K562 (cell line): ENCODE measurements at regions of chr7 and their contacts with region 1.

Region 1: GRCh38 chr7:87231256-87231655 is 11.7 kb upstream of the TMEM243 start:
- DNase-seq: no peak
- ATAC-seq: no peak; the same call in 2 of the 3 replicates
- H3K4me3 ChIP-seq: no peak overlapping the region
- H3K27ac ChIP-seq: no peak overlapping the region
- H3K4me1 ChIP-seq: no peaks in the 10 kb centered on the region
- H3K27me3 ChIP-seq: peaks cover 12 to 17% of the 10 kb centered on the region in 2 experiments; a peak in 4 of 5 replicates
- CTCF ChIP-seq: no peak
- EP300 ChIP-seq: no peak
- POLR2A ChIP-seq: no peak
- RAD21 ChIP-seq: no peak

Region 2: GRCh38 chr7:86823769-86824168 is 407.5 kb before region 1 on chr7:
- CTCF ChIA-PET with region 1: no interaction called
- POLR2A ChIA-PET with region 1: no interaction called
- in situ Hi-C with region 1: no loop called
- intact Hi-C with region 1: loop called (anchors 10 kb)
- DNase-seq: no peak
- ATAC-seq: no peak; the same call in 2 of the 3 replicates
- H3K4me3 ChIP-seq: no peak overlapping the region
- H3K27ac ChIP-seq: no peak overlapping the region
- H3K4me1 ChIP-seq: no peaks in the 10 kb centered on the region
- H3K27me3 ChIP-seq: no peaks in the 10 kb centered on the region
- CTCF ChIP-seq: no peak
- EP300 ChIP-seq: no peak
- POLR2A ChIP-seq: no peak
- RAD21 ChIP-seq: no peak

Region 3: DNA sequence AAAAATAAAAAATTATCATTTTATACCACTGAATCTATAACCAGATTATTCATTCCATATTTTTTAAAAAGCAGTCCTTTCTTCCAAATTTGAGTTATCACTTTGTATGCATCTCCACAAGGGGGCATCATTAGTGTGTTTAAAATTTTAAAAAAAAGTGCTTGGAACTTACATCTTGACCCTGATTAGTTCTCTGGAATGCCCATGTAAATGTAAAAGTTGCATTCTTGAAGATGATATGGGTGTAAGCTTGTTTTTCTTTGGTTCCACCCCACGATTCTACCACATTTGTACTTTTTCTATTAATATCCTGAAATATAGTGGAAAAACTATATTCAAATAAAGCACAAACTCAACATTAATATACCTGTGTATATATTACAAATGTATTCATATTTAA is 316.7 kb before region 1 on chr7:
- CTCF ChIA-PET with region 1: interaction called, 6 read pairs
- POLR2A ChIA-PET with region 1: no interaction called
- in situ Hi-C with region 1: no loop called
- intact Hi-C with region 1: loop called (anchors 2 kb)
- DNase-seq: peak; percentile 34 to 47 (median 36)
- ATAC-seq: peak; percentile 69
- H3K4me3 ChIP-seq: no peak overlapping the region
- H3K27ac ChIP-seq: no peak overlapping the region
- H3K4me1 ChIP-seq: no peaks in the 10 kb centered on the region
- H3K27me3 ChIP-seq: no peaks in the 10 kb centered on the region
- CTCF ChIP-seq: peak; percentile 45 to 69 (median 50); a peak in 4 of 6 replicates
- EP300 ChIP-seq: no peak
- POLR2A ChIP-seq: no peak
- RAD21 ChIP-seq: peak; percentile 59 to 68

Region 4: DNA sequence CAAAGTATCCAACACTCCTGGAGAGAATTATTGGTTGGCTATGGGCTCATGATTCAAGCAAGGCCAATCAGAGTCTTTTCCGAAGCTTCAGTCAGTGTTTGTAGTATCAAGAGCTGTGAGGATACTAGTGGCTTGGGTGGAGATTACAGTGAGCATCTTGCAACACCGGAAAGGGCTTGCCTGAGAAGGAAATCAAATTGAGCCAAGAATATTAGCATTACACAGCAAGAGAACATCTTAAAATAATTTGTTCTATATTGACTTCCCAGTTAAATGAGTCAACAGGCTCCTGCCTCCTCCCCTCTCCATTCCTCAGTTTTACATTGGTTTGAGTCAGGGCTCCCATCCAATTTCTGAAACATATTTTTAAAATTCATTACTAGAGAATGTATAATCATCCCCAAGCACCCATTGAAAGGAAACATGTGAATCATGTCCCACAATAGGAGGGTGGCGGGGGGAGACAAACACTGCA is 299.2 kb before region 1 on chr7:
- CTCF ChIA-PET with region 1: interaction called, 3 read pairs
- POLR2A ChIA-PET with region 1: no interaction called
- in situ Hi-C with region 1: loop called (anchors 5 kb)
- intact Hi-C with region 1: no loop called
- DNase-seq: no peak
- ATAC-seq: peak; percentile 31; the same call in 2 of the 3 replicates
- H3K4me3 ChIP-seq: no peak overlapping the region
- H3K27ac ChIP-seq: no peak overlapping the region; the same call in 2 of the 3 replicates
- H3K4me1 ChIP-seq: peaks cover 4 to 15% of the 10 kb centered on the region in 2 experiments; a peak in 3 of 5 replicates
- H3K27me3 ChIP-seq: no peaks in the 10 kb centered on the region
- CTCF ChIP-seq: no peak
- EP300 ChIP-seq: no peak
- POLR2A ChIP-seq: no peak
- RAD21 ChIP-seq: no peak

Region 5: DNA sequence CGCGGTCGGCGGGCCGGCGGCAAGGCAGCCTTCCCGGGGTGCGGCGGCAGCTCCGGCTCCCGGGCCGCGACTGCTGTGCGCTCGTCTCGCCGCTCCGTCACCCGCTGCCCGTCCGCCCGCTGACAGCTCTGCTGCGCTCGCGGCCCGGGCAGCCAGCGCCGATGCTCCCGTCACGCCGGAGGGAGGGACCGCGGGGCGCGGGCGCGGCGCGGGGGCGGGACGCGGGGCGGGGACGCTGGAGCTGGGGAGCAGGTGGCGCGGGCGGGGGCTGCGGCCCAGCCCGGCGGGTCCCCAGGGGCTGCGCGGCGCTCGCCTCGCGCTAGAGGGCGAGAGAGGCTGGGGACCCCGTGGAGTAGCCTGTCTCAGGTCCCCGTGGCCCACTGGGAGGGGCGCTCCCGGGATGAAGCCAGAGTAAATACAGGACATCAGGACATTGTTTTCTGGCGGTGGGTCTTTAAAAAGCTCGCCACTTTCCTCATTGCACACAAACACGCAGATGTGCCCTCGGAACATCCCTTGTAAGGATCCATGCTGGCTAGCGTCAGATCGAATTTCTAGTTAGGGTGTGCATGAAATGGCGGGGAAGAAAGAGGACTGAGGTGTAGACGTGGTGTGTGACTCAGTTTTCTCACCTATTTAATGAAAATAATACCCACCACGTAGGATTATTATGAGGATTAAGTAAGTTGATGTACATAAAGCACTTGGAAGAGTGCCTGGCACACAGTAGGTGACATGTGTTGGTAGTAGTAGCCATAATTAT is 171.6 kb before region 1 on chr7 and contains the start of gene ELAPOR2:
- CTCF ChIA-PET with region 1: no interaction called
- POLR2A ChIA-PET with region 1: no interaction called
- in situ Hi-C with region 1: no loop called
- intact Hi-C with region 1: loop called (anchors 2 kb)
- DNase-seq: peak; percentile 96 to 97 (median 97)
- ATAC-seq: peak; percentile 99
- H3K4me3 ChIP-seq: peak within 1 kb of the TSS; percentile 73
- H3K27ac ChIP-seq: peak within 1 kb of the TSS; percentile 79
- H3K4me1 ChIP-seq: peaks cover 9 to 31% of the 10 kb centered on the region in 2 experiments
- H3K27me3 ChIP-seq: no peaks in the 10 kb centered on the region
- CTCF ChIP-seq: peak; percentile 79 to 94 (median 91)
- EP300 ChIP-seq: no peak; the same call in 1 of the 2 replicates
- POLR2A ChIP-seq: peak; percentile 72
- RAD21 ChIP-seq: peak; percentile 87 to 92
- polyA plus RNA-seq, gene ELAPOR2: 9.2 to 17.3 TPM

Region 6: GRCh38 chr7:87219545-87220025 is 11.7 kb before region 1 on chr7 and contains the start of gene TMEM243:
- CTCF ChIA-PET with region 1: no interaction called
- POLR2A ChIA-PET with region 1: interaction called, 12 read pairs
- in situ Hi-C with region 1: no loop called
- intact Hi-C with region 1: no loop called
- DNase-seq: peak; percentile 62 to 73 (median 68)
- ATAC-seq: peak; percentile 83
- H3K4me3 ChIP-seq: peak within 1 kb of the TSS; percentile 61
- H3K27ac ChIP-seq: peak within 1 kb of the TSS; percentile 9; the same call in 1 of the 3 replicates
- H3K4me1 ChIP-seq: peaks cover 11 to 18% of the 10 kb centered on the region in 2 experiments; a peak in 4 of 5 replicates
- H3K27me3 ChIP-seq: peaks cover 24 to 29% of the 10 kb centered on the region in 2 experiments; a peak in 4 of 5 replicates
- CTCF ChIP-seq: peak in 2 of 3 experiments; percentile 14 to 19; a peak in 1 of 6 replicates
- EP300 ChIP-seq: no peak
- POLR2A ChIP-seq: no peak
- RAD21 ChIP-seq: no peak
- polyA plus RNA-seq, gene TMEM243: 3.9 to 4.2 TPM